WTC11 (cell line): ENCODE measurements at regions of chr3 and their contacts with region 1.

Region 1: DNA sequence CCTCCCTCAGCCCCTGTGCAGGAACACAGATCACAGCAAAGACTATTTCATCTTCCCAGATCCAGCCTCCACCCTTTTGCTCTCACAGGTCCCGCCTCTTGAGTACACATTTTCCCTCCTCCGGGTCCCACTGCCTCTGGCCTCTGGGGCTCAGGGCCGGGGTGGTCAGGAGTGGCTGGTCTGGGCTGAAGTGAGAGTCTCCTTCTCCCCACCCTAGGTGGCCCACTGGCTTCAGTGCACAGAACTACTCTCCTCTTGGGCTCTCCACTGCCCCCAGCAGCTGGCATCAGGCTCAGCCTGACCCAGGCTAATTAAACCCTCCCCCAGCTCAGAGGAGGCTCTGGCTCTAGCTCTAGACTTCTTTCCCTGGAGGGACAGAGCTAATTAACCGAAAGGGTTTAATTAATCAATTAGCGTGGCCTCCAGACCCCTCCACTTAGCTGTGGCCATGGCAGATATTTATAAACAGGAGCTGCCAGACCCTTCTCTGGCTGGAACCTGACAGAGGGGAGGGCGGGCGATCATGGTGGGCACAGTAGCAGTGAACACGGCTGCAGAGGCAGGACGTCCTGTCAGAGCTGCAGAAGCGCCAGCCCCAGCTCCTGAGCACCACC is 15.1 kb downstream of the DUSP7 start:
- DNase-seq: peak; percentile 41
- ATAC-seq: peak; percentile 46
- H3K4me3 Mint-ChIP-seq: no peak overlapping the region
- H3K27ac Mint-ChIP-seq: no peak overlapping the region
- H3K4me1 Mint-ChIP-seq: peaks cover 9% of the 10 kb centered on the region
- H3K27me3 Mint-ChIP-seq: no peaks in the 10 kb centered on the region
- CTCF ChIP-seq: no peak

Region 2: DNA sequence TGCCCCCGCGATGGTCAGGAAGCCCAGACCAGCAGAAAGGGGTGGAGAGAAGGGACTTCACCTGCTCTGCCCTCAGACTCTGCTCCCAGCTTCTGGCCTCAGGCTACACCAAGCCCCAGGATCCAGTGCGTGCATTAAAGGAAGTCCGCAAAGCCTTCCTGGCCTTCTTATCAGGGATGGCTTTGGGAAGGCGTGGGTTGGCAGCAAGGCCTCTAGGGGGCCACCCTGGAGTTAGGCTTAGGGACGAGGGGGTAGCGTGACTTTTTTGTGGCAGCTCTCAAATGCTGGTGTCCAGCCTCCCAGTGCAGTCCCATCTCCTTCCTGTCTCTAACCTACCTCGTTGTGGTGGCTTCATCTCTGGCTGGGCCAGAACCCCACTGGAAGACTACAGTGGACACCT is 26.6 kb before region 1 on chr3:
- CTCF ChIA-PET with region 1: interaction called, 16 read pairs
- POLR2A ChIA-PET with region 1: no interaction called
- DNase-seq: peak; percentile 66
- ATAC-seq: peak; percentile 92
- H3K4me3 Mint-ChIP-seq: no peak overlapping the region
- H3K27ac Mint-ChIP-seq: 0 out of 2 replicates have a peak overlapping the region, but pooled peaks have one; percentile 15
- H3K4me1 Mint-ChIP-seq: peaks cover 5% of the 10 kb centered on the region; the same call in 1 of the 2 replicates
- H3K27me3 Mint-ChIP-seq: no peaks in the 10 kb centered on the region; the same call in 1 of the 2 replicates
- CTCF ChIP-seq: no peak

Region 3: DNA sequence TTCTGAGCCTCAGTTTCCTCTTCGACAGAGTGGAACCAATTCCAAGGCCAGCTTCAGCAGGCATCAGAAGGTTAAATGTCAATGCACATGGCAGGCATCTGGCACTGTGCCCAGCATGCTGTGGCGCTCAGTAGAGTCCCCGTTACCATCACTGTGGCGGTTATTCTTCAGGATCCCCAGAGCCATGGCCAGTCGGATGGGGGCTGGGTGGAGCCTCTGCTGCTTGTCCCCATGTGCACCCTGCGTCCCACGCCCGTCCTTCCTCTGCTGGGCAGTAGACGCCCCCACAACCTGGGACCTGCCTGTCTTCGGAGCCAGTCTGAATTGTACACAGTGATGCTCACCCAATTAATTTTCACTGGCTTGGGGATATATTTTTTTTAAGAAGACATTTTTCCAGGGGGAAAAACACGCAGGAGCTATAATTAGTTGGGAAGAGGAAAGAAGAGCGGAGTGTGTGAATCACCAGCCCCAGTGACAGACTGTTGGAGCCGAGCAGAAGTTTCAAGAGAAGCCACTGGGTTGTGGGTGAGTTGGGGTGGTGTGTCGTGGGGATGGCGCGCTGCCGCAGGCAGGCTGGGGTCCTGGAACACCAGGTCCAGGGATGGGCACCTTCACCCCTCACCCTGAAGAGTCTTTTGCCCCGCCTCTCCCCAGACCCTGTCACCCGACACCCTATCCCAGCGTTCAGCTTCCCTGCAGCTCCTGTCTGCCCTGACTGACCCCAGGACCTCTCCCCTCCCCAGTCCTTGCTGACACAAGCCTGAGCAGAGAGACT is 18.7 kb before region 1 on chr3:
- CTCF ChIA-PET with region 1: interaction called, 11 read pairs
- POLR2A ChIA-PET with region 1: no interaction called
- DNase-seq: no peak
- ATAC-seq: peak; percentile 84
- H3K4me3 Mint-ChIP-seq: no peak overlapping the region
- H3K27ac Mint-ChIP-seq: no peak overlapping the region
- H3K4me1 Mint-ChIP-seq: peaks cover 9% of the 10 kb centered on the region
- H3K27me3 Mint-ChIP-seq: no peaks in the 10 kb centered on the region
- CTCF ChIP-seq: no peak